PC-3 (cell line): ENCODE measurements at regions of chr14 and their contacts with region 1.

Region 1: DNA sequence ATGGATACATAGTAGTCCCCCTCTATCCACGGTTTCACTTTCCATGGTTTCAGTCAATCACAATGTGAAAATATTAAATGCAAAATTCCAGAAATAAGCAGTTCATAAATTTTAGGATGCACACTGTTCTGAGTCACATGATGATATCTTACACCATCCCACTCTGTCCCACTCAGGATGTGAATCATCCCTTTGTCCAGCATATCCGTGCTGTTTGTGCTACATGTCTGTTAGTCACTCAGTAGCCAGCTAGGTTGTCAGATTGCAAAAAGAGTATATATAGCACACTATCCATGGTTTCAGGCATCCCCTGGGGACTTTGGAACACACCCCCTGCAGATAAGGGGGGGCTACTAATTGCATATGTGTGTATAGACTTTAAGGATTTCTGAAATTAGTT is 8.1 kb upstream of the NAA30 start:
- DNase-seq: peak; percentile 99
- ATAC-seq: peak; percentile 99
- H3K4me3 ChIP-seq: no peak overlapping the region
- H3K27ac ChIP-seq: peak overlapping the region; percentile 45
- H3K4me1 ChIP-seq: peaks cover 33% of the 10 kb centered on the region
- H3K27me3 ChIP-seq: no peaks in the 10 kb centered on the region
- CTCF ChIP-seq: no peak

Region 2: DNA sequence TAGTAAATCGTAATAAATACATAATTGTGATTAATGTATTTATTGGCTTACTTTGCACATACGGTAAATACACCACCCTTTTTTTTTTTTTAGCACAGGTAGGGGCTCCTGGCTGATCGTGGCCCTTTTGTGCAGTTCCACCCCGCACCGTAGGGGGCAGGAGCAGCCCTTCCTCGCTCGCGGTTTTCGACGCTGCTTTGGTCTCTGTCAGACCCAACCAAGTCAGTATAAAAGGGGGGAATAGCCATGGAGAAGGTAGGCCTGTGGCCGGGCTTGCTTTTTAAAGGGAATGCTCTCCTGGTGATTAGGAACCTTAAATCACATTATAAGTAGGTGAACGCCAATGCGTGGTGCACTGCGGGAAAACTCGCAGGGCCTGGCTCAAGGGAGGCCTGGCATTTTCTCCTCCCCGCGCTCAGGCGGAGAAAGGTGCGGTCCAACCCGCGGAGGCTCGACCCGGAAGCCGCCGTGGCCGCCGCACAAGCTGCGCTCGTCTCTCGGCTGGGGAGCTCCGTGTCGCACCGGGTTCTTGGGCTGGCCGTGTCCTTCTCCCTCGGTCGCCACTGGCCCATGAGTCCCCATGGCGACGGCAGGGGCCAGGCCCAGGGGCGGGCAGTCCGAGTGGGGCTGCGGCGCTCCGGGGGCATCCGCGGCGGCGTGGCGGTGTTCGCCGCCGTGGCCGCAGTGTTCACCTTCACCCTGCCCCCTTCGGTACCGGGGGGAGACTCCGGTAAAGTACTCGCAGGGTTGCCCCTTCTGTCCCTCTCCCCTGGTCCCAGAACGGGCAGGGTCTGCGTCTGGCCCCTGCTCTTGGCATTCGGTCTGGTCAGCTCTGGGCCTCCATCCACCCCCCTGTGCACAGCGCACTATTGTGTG is 802.7 kb before region 1 on chr14 and contains the start of gene TMEM260:
- CTCF ChIA-PET with region 1: no interaction called
- POLR2A ChIA-PET with region 1: no interaction called
- intact Hi-C with region 1: no loop called
- DNase-seq: peak; percentile 98
- ATAC-seq: peak; percentile 78
- H3K4me3 ChIP-seq: peak within 1 kb of the TSS; percentile 81
- H3K27ac ChIP-seq: peak within 1 kb of the TSS; percentile 61
- H3K4me1 ChIP-seq: peaks cover 42% of the 10 kb centered on the region
- H3K27me3 ChIP-seq: peaks cover 28% of the 10 kb centered on the region; the same call in 1 of the 2 replicates
- CTCF ChIP-seq: peak; percentile 98
- total RNA-seq, gene TMEM260: 17.8 and 28.6 TPM in 2 replicates

Region 3: GRCh38 chr14:57066887-57067513 is 315.3 kb before region 1 on chr14:
- CTCF ChIA-PET with region 1: no interaction called
- POLR2A ChIA-PET with region 1: no interaction called
- intact Hi-C with region 1: loop called (anchors 2 kb)
- DNase-seq: peak; percentile 79
- ATAC-seq: peak; percentile 94
- H3K4me3 ChIP-seq: no peak overlapping the region
- H3K27ac ChIP-seq: no peak overlapping the region
- H3K4me1 ChIP-seq: no peaks in the 10 kb centered on the region
- H3K27me3 ChIP-seq: peaks cover 88% of the 10 kb centered on the region
- CTCF ChIP-seq: peak; percentile 99

Region 4: GRCh38 chr14:57209561-57209960 is 172.7 kb before region 1 on chr14:
- CTCF ChIA-PET with region 1: no interaction called
- POLR2A ChIA-PET with region 1: interaction called, 5 read pairs
- intact Hi-C with region 1: loop called (anchors 5 kb)
- DNase-seq: peak; percentile 73
- ATAC-seq: peak; percentile 97
- H3K4me3 ChIP-seq: no peak overlapping the region
- H3K27ac ChIP-seq: no peak overlapping the region
- H3K4me1 ChIP-seq: peaks cover 3% of the 10 kb centered on the region; the same call in 1 of the 2 replicates
- H3K27me3 ChIP-seq: no peaks in the 10 kb centered on the region
- CTCF ChIP-seq: no peak

Region 5: GRCh38 chr14:57268161-57269069 is 113.9 kb before region 1 on chr14 and contains the starts of genes AP5M1 and EXOC5:
- CTCF ChIA-PET with region 1: interaction called, 8 read pairs
- POLR2A ChIA-PET with region 1: no interaction called
- intact Hi-C with region 1: loop called (anchors 1 kb)
- DNase-seq: peak; percentile 100
- ATAC-seq: peak; percentile 81
- H3K4me3 ChIP-seq: peak within 1 kb of the TSS; percentile 77
- H3K27ac ChIP-seq: peak within 1 kb of the TSS; percentile 73
- H3K4me1 ChIP-seq: peaks cover 40% of the 10 kb centered on the region
- H3K27me3 ChIP-seq: no peaks in the 10 kb centered on the region
- CTCF ChIP-seq: peak; percentile 21; the same call in 1 of the 2 replicates
- total RNA-seq, gene AP5M1: 41.3 and 48.7 TPM in 2 replicates
- total RNA-seq, gene EXOC5: 109 TPM in 2 replicates

Region 6: DNA sequence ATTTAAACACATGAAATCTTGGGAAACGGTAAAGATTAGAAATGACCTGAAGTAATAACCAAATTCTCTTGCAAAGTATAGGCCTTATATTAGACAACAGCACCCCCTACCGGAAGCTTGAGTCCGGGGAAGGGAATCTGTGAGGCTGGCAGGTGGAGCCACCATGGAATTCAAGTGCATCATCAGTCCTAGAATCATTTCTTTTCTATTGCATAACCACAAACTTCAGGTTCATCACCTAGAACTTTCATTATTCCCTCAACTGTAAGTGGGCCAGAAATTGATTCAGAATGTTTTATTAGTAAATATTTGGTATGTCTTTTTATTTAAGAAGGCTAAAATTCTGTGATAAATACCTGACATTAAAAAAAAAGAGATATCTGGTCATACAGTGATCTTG is 65.0 kb before region 1 on chr14:
- CTCF ChIA-PET with region 1: interaction called, 4 read pairs
- POLR2A ChIA-PET with region 1: no interaction called
- intact Hi-C with region 1: loop called (anchors 1 kb)
- DNase-seq: peak; percentile 99
- ATAC-seq: peak; percentile 89
- H3K4me3 ChIP-seq: no peak overlapping the region
- H3K27ac ChIP-seq: no peak overlapping the region
- H3K4me1 ChIP-seq: no peaks in the 10 kb centered on the region
- H3K27me3 ChIP-seq: peaks cover 44% of the 10 kb centered on the region
- CTCF ChIP-seq: peak; percentile 100

Region 7: DNA sequence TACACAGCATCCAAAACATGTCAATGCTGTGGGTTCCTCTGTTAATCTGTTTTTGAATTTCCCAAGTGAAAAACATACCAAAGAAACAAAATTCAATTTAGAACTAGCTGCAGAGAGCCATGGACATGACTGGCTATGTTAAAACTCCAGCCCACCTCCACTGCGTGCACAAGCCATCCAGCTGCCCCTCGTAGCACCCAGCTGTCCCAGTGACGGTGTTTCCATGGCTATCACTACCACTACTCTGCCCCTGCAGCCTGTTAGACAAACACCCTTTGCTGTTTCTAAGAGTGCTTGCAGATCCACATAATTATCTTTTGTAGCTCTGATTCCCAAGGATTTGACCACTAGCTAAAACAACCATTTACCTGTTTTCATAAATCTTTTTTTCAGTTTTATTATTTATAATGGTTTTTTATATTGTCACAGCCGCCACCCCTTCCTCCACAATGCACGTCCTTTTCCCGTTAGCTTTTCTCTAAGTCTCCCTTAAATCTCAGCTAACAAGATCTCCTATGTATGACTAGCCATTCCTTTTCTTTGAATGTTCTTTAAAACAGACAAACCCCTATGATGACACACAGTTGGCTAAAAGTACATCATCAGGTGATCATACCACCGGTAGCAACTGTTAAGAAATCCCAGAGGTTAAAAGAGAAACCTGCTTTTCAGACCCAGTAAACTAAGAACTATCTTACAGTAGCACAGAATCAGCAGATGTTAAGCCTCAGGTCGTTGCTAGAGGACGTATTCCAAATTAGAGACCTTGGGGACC is 29.7 kb before region 1 on chr14:
- CTCF ChIA-PET with region 1: no interaction called
- POLR2A ChIA-PET with region 1: no interaction called
- intact Hi-C with region 1: loop called (anchors 2 kb)
- DNase-seq: peak; percentile 75
- ATAC-seq: no peak; the same call in 1 of the 2 replicates
- H3K4me3 ChIP-seq: no peak overlapping the region
- H3K27ac ChIP-seq: no peak overlapping the region
- H3K4me1 ChIP-seq: peaks cover 38% of the 10 kb centered on the region
- H3K27me3 ChIP-seq: peaks cover 7% of the 10 kb centered on the region; the same call in 1 of the 2 replicates
- CTCF ChIP-seq: no peak

Region 8: DNA sequence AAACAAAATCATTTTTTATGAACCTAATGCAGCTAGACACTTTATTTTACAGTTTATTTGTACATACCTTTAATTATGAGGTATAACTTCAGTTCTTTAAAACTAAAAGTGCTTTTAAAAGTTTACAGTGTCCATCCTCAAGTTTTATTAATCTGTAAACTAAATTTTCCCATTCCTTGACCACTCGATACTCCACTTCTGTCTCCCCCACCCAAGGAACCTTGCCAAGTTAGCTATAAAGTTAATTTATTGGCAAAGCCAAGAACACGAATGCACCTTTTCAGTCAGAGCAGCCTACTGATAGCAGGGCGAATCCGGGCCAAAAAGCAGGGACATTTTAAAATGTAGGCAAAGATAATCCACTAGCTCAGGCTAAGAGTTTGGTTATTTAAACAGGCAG is 37.8 kb after region 1 on chr14:
- CTCF ChIA-PET with region 1: no interaction called
- POLR2A ChIA-PET with region 1: interaction called, 13 read pairs
- intact Hi-C with region 1: no loop called
- DNase-seq: no peak
- ATAC-seq: no peak
- H3K4me3 ChIP-seq: no peak overlapping the region
- H3K27ac ChIP-seq: no peak overlapping the region
- H3K4me1 ChIP-seq: peaks cover 6% of the 10 kb centered on the region; the same call in 1 of the 2 replicates
- H3K27me3 ChIP-seq: no peaks in the 10 kb centered on the region
- CTCF ChIP-seq: no peak